K562 (cell line): ENCODE measurements at regions of chr10 and their contacts with region 1.

Region 1: DNA sequence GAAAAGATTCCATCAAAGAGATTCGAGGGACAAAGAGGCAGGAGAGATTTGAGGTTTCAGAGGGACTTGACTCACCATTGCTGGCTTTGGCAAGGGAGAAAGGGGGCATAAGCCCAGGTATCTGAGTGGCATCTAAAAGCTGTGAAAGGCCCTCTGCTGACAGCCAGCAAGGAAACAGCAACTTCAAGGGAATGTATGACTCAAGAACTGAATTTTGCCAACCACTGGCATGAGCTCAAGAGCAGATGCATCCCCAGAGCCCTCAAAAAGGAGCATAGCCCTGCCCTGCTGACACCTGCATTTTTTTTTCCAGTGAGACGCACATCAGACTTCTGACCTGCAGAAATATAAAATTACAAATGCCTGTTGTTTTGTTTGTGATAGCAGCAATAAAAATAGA is 19.6 kb upstream of the ADAM12 start:
- DNase-seq: no peak
- ATAC-seq: no peak
- H3K4me3 ChIP-seq: no peak overlapping the region
- H3K27ac ChIP-seq: no peak overlapping the region
- H3K4me1 ChIP-seq: no peaks in the 10 kb centered on the region
- H3K27me3 ChIP-seq: peaks cover 0 to 5% of the 10 kb centered on the region in 2 experiments; a peak in 2 of 5 replicates
- CTCF ChIP-seq: no peak
- EP300 ChIP-seq: no peak
- POLR2A ChIP-seq: no peak
- RAD21 ChIP-seq: no peak

Region 2: DNA sequence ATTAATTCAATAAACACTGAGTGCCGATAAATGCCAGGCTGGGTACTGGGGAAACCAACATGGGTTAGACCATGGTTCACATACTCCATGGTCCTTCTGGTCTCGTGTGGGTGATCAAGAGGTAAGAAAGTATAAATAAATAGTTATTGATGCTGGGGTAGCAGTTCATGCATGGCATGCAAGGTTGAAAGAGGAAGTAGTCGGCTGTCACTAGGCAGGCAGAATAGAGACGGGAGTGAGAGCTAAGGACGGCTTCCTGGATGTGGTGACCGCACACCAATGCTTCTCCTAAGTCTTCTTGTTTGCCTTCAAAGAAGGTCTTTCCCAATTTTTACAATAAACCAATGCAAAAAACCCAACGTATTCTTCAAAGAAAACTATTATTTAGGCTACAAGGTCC is 228.2 kb before region 1 on chr10:
- CTCF ChIA-PET with region 1: no interaction called
- POLR2A ChIA-PET with region 1: no interaction called
- in situ Hi-C with region 1: no loop called
- intact Hi-C with region 1: loop called (anchors 10 kb)
- DNase-seq: no peak
- ATAC-seq: no peak
- H3K4me3 ChIP-seq: no peak overlapping the region
- H3K27ac ChIP-seq: no peak overlapping the region
- H3K4me1 ChIP-seq: no peaks in the 10 kb centered on the region
- H3K27me3 ChIP-seq: peaks cover 0 to 6% of the 10 kb centered on the region in 2 experiments; a peak in 1 of 5 replicates
- CTCF ChIP-seq: no peak
- EP300 ChIP-seq: no peak
- POLR2A ChIP-seq: no peak
- RAD21 ChIP-seq: no peak